CD8-positive, alpha-beta T cell (primary cell): ENCODE measurements at regions of chr4 and their contacts with region 1.

Region 1: DNA sequence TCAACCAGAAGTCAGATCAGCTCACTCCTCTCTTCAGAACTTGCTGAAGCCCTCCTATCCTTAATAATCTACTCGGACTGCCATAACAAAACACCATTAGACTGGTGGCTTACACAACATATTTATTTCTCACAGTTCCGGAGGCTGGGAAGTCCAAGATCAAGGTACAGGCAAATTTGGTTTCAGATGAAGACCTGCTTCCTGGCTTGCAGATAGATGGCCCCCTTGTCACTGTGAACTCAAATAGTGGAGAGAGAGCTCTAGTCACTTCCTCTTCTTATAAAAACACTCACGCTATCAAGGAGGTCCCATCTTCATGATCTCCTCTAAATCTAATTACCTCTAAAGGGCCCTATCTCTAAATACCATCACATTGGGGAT is 125.1 kb downstream of the CAMK2D start:
- DNase-seq: peak in 6 of 9 experiments; percentile 6 to 71 (median 46)
- ATAC-seq: peak; percentile 78
- H3K4me3 ChIP-seq: no peak overlapping the region
- H3K4me3 Mint-ChIP-seq: peak overlapping the region; percentile 30
- H3K27ac ChIP-seq: peak overlapping the region; percentile 17 to 63
- H3K27ac Mint-ChIP-seq: peak overlapping the region; percentile 90
- H3K4me1 ChIP-seq: peaks cover 39% of the 10 kb centered on the region
- H3K4me1 Mint-ChIP-seq: peaks cover 56% of the 10 kb centered on the region
- H3K27me3 ChIP-seq: no peaks in the 10 kb centered on the region
- H3K27me3 Mint-ChIP-seq: no peaks in the 10 kb centered on the region
- CTCF ChIP-seq: peak; percentile 32

Region 2: DNA sequence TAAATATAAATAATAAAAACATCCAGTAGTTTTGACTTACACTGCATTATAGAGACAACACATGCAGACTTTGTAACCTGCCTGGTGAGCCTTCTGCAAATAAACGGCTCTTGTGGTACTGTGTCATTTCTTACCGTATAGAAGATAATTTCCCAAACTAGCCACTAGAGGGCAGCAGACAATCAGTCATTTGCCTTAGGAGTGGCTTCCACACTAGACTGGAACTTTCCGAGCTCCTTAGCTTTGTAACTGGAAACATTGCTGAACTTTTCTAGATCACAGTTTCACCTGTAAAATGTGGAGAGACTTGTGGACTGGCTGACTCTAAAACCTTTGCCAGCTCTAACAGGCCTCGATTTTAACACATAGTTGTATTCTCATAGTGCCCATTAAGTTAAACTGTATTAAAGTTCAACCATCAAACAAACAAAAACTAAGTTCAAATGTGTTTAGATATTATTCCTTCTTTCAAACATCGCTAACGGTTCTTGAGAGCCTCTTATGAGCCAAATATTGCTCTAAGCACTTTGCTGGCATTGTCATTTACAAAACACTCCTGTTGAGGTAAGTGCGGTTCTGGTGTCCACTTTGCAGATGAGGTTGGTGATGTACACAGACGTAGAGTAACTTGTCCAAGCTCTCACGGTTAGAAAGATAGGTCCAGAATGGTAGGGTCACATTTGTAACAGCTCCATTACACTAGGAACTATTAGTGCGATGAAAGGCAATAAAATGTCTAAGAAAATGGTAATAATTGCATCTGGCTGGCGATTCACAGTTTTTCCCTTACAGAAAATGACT is 241.5 kb before region 1 on chr4:
- CTCF ChIA-PET with region 1: no interaction called
- POLR2A ChIA-PET with region 1: no interaction called
- intact Hi-C with region 1: loop called in 1 of 2 experiments (anchors 10 kb)
- DNase-seq: peak in 8 of 9 experiments; percentile 1 to 80 (median 48)
- ATAC-seq: peak; percentile 78
- H3K4me3 ChIP-seq: no peak overlapping the region
- H3K4me3 Mint-ChIP-seq: no peak overlapping the region
- H3K27ac ChIP-seq: no peak overlapping the region
- H3K27ac Mint-ChIP-seq: no peak overlapping the region
- H3K4me1 ChIP-seq: no peaks in the 10 kb centered on the region
- H3K4me1 Mint-ChIP-seq: no peaks in the 10 kb centered on the region
- H3K27me3 ChIP-seq: peaks cover 0 to 6% of the 10 kb centered on the region in 2 experiments
- H3K27me3 Mint-ChIP-seq: peaks cover 2% of the 10 kb centered on the region
- CTCF ChIP-seq: peak; percentile 92

Region 3: DNA sequence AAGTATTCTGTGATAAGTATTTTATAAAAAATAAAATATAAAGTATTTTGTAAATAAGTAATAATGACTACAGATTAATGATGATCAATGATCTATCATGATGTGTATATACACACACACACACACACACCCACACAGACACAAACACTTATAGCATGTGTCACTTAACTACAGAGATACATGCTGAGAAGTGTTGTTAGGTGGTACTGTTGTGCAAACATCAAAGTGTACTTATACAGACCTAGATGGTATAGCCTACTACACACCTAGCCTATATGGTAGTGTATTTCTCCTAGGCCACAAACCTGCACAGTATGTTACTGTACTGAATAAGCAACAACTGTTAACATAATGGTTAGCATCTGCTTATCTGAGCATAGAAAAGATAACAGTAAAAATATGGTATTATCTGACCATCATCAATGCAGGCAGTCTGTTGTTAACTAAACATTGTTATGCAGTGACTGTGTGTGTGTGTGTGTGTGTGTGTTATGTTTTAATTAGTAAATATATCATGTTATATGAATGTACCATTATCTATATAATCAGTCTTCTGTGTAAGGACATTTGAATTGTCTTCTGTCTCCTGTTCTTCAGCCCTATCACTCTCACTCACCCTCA is 13.0 kb before region 1 on chr4:
- CTCF ChIA-PET with region 1: no interaction called
- POLR2A ChIA-PET with region 1: no interaction called
- intact Hi-C with region 1: loop called in 1 of 2 experiments (anchors 2 kb)
- DNase-seq: no peak
- ATAC-seq: no peak
- H3K4me3 ChIP-seq: no peak overlapping the region
- H3K4me3 Mint-ChIP-seq: no peak overlapping the region
- H3K27ac ChIP-seq: no peak overlapping the region
- H3K27ac Mint-ChIP-seq: no peak overlapping the region
- H3K4me1 ChIP-seq: no peaks in the 10 kb centered on the region
- H3K4me1 Mint-ChIP-seq: peaks cover 18% of the 10 kb centered on the region
- H3K27me3 ChIP-seq: no peaks in the 10 kb centered on the region
- H3K27me3 Mint-ChIP-seq: no peaks in the 10 kb centered on the region
- CTCF ChIP-seq: no peak

Region 4: GRCh38 chr4:113761620-113762185 is 125.3 kb after region 1 on chr4 and contains the start of gene CAMK2D:
- CTCF ChIA-PET with region 1: interaction called, 6 read pairs
- POLR2A ChIA-PET with region 1: interaction called, 7 read pairs
- intact Hi-C with region 1: loop called (anchors 1 to 5 kb)
- DNase-seq: peak; percentile 62 to 95 (median 80)
- ATAC-seq: peak; percentile 58
- H3K4me3 ChIP-seq: peak within 1 kb of the TSS; percentile 75 to 85
- H3K4me3 Mint-ChIP-seq: peak within 1 kb of the TSS; percentile 94
- H3K27ac ChIP-seq: peak within 1 kb of the TSS; percentile 96
- H3K27ac Mint-ChIP-seq: peak within 1 kb of the TSS; percentile 98
- H3K4me1 ChIP-seq: peaks cover 26% of the 10 kb centered on the region
- H3K4me1 Mint-ChIP-seq: peaks cover 38% of the 10 kb centered on the region
- H3K27me3 ChIP-seq: no peaks in the 10 kb centered on the region
- H3K27me3 Mint-ChIP-seq: no peaks in the 10 kb centered on the region
- CTCF ChIP-seq: no peak
- total RNA-seq, gene CAMK2D: 29.6 to 31.1 TPM

Region 5: DNA sequence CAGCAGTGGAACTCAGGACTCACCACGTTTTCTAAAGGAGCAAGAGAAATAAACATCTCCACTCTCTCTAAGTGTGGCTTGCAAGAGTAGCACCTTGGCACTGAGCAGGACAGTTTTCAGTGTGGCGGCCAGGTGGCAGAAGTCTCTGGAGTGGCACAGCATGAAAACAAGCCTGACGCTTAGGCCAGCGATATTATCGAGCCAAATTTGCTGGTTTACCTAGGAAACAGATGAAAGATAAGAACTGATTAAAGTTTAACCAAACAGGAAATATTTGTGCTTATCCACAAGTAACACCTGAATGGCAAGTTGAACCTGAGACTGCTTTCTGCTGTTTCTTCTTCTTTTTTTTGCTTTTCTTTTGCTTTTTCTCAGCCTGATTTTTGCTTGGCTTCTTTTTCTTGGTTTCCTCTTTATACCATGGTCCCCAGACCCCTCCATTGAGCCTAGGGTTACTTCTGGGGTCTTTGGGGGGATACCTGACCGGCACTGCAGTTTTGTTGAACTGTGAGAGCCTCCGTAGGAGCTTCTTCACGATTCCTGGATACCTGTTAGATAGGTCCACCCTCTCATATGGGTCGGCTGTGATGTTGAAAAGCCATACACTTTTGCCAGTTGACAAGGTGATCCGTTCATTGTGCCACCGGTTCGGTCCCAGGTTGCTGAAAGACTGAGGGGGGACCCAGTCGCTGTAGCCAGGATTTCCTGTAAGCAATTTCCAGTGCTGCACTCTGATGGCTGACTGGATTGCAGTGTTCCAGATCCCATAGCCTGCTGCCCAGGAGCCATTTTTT is 265.8 kb after region 1 on chr4:
- CTCF ChIA-PET with region 1: interaction called, 3 read pairs
- POLR2A ChIA-PET with region 1: no interaction called
- intact Hi-C with region 1: loop called (anchors 2 to 5 kb)
- DNase-seq: peak; percentile 35 to 86 (median 66)
- ATAC-seq: peak; percentile 84
- H3K4me3 ChIP-seq: peak overlapping the region in 1 of 2 experiments; percentile 27
- H3K4me3 Mint-ChIP-seq: peak overlapping the region; percentile 51
- H3K27ac ChIP-seq: peak overlapping the region; percentile 49 to 73
- H3K27ac Mint-ChIP-seq: peak overlapping the region; percentile 90
- H3K4me1 ChIP-seq: peaks cover 80% of the 10 kb centered on the region
- H3K4me1 Mint-ChIP-seq: peaks cover 80% of the 10 kb centered on the region
- H3K27me3 ChIP-seq: no peaks in the 10 kb centered on the region
- H3K27me3 Mint-ChIP-seq: no peaks in the 10 kb centered on the region
- CTCF ChIP-seq: peak; percentile 56

Region 6: GRCh38 chr4:114076899-114077570 is 440.6 kb after region 1 on chr4:
- CTCF ChIA-PET with region 1: interaction called, 3 read pairs
- POLR2A ChIA-PET with region 1: no interaction called
- intact Hi-C with region 1: loop called in 1 of 2 experiments (anchors 5 kb)
- DNase-seq: no peak
- ATAC-seq: no peak
- H3K4me3 ChIP-seq: no peak overlapping the region
- H3K4me3 Mint-ChIP-seq: no peak overlapping the region
- H3K27ac ChIP-seq: no peak overlapping the region
- H3K27ac Mint-ChIP-seq: no peak overlapping the region
- H3K4me1 ChIP-seq: no peaks in the 10 kb centered on the region
- H3K4me1 Mint-ChIP-seq: no peaks in the 10 kb centered on the region
- H3K27me3 ChIP-seq: no peaks in the 10 kb centered on the region
- H3K27me3 Mint-ChIP-seq: no peaks in the 10 kb centered on the region
- CTCF ChIP-seq: no peak